ENCODE measurements at regions of chr15 and their contacts with region 1.

Region 1: DNA sequence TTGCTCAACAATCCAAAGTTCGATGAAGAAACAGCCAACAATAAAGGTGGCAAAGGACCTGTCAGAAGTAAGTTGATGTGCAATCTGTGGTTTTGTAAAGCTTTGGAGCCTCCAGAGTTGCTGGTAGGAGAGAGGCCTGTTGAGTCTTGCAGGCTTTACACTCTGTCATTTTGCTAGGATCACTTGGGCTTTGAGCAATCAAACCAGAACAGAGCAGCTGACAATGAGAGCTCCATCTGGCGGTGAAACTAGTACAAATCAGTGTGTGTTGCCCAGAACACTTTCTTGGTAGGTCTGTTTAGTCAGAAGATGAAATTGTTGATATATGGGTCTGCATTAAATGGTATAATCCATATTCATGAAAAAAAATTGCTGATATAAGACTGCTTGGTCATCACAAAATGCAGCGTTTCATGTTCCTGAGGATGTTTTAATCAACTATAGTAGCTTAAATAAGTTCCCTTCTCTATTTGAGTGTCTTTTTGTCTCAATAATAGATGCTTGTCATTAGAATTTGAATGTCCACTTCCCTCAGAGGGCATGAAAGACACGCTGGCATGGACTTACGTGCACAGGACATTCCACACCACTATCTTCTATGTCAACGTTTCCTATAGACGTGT is 25.7 kb downstream of the TMOD2 start:
- DNase-seq: peak; percentile 58
- H3K4me3 ChIP-seq: no peak overlapping the region
- H3K27ac ChIP-seq: no peak overlapping the region
- H3K27me3 ChIP-seq: no peaks in the 10 kb centered on the region
- CTCF ChIP-seq: peak; percentile 84

Region 2: DNA sequence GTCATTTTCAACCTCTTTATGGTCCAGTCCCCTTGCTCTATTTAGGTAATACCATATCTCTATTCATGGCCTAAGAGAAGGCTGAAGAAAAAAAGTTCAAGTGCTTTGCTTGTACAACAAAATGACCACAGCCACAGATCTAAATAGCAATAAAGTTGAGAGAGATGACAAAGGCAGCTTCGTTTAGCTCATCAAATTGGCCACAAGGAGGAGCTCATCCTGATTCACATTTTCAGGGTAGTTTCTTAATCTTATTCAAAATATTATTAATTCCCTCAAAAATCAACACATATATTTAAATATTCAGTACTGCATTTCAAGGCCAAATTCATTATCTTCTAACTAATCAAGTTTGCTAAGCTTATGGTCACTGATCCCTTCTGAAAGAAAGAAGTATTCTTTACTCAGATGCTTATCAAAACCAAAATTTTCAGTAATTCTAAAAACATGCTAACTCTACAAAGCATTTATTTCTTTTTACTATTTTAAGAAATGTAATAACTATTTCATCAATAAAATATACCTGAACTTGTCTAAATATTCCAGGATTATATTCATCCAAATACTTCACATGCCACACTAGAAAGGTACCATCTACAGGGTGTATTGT is 240.0 kb before region 1 on chr15:
- CTCF ChIA-PET with region 1: interaction called, 18 read pairs
- POLR2A ChIA-PET with region 1: no interaction called
- DNase-seq: no peak
- H3K4me3 ChIP-seq: no peak overlapping the region
- H3K27ac ChIP-seq: no peak overlapping the region
- H3K27me3 ChIP-seq: no peaks in the 10 kb centered on the region
- CTCF ChIP-seq: peak; percentile 77

Region 3: DNA sequence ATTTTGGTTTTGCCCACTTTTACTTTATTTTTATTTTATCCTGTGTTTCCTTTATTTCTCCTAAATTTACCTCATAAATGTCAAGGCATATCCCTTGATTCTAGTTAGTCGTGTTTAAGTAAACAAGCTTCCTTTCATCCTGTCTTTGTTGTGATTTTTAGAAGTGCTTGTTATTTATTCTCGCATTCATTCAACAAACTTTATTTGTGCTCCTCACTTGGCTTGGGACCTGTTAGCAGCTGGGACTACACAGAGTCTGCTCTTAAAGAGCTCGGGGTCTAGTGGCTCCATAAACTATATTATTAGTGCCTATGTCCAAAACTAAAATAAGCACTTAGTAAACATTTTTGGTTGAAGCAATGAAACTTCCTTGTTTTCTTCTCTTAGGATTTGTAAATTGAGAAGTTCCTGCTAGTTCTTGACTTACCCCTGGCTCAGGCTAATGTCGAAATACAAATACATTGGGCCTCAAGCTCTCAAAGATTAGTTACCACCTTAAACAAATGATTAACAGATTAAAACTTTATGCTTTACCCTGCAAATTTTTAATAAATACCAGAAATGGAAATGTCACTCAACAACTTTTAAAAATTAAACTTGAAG is 135.4 kb before region 1 on chr15:
- CTCF ChIA-PET with region 1: interaction called, 490 read pairs
- POLR2A ChIA-PET with region 1: no interaction called
- DNase-seq: no peak
- H3K4me3 ChIP-seq: no peak overlapping the region
- H3K27ac ChIP-seq: no peak overlapping the region
- H3K27me3 ChIP-seq: no peaks in the 10 kb centered on the region
- CTCF ChIP-seq: no peak

Region 4: DNA sequence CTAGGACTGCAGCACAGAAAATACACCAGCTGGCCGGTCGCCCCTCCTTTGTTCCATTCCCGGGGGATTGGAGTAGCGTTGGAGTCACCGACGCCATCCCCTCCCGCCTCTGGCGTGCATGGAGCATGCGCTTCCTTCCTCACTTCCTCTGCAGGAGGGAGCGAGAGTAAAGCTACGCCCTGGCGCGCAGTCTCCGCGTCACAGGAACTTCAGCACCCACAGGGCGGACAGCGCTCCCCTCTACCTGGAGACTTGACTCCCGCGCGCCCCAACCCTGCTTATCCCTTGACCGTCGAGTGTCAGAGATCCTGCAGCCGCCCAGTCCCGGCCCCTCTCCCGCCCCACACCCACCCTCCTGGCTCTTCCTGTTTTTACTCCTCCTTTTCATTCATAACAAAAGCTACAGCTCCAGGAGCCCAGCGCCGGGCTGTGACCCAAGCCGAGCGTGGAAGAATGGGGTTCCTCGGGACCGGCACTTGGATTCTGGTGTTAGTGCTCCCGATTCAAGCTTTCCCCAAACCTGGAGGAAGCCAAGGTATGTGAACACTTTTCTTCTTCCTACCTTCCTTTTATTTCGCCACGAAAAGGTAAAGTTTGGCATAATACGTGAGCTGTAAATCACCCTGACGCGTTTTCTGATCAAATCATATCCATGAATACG is 95.6 kb before region 1 on chr15 and contains the start of gene SCG3:
- CTCF ChIA-PET with region 1: interaction called, 14 read pairs
- POLR2A ChIA-PET with region 1: no interaction called
- DNase-seq: no peak
- H3K4me3 ChIP-seq: no peak within 1 kb of the TSS
- H3K27ac ChIP-seq: no peak within 1 kb of the TSS
- H3K27me3 ChIP-seq: peaks cover 3% of the 10 kb centered on the region
- CTCF ChIP-seq: no peak
- polyA plus RNA-seq, gene SCG3: not detected in 2 replicates

Region 5: DNA sequence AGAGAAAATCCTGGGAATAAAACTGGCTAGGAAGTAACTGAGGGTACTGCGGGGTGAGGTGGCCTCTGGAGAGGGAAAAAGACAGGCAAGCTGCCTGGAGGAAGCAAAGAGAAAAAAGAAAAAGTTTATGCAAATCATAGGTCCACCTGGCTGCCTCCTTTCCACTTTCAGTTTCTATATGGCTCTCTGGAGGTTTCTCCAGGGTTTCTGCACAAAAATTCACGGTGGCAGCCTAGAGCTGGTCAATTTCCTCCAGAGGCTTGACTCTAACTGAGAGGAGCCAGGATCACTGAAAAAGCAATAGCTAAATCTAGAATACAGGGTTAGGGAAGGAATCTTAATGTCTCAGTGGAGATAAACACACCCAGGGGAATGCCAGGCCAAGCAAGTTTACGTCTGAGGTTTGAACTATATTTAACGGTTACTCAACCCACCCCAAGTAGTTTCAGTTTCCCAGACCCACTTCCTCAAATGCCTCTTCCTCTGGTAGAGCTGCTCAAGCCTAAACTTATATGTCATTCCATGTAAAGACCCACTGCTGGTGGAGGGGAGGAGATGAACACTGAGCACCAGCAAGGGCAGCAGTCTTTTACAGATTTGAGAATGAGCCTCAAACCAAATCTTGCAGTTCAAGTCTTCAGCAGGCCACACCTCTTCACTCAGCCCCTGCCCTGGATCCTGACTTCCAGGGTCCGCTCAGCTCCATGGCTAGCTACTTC is 45.4 kb before region 1 on chr15:
- CTCF ChIA-PET with region 1: interaction called, 22 read pairs
- POLR2A ChIA-PET with region 1: no interaction called
- DNase-seq: peak; percentile 54
- H3K4me3 ChIP-seq: peak overlapping the region; percentile 39
- H3K27ac ChIP-seq: peak overlapping the region; percentile 73
- H3K27me3 ChIP-seq: no peaks in the 10 kb centered on the region
- CTCF ChIP-seq: no peak

Region 6: DNA sequence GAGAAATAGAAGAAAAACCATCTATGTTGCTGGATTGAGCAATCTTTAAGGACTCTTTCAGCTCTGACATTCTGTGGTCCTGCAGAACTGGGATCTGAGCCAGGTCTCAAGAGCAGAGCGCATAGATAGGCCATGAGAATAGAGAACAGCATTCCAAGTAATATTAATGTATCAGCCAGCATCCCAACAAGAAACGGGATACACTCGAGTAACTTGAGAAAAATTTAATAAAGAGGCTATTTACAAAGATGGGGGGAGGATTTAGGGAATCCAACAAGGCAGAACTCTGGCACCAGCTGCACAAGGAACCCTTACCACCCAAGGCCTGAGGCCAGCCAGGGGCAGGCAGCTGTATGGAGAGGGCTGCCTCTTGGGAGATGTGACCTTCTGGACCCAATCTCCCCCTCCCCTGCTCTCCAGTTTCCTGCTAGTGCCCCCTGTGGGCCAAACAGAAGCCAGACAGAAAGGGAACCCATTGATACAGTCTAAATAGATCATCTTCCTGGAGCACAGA is 17.4 kb before region 1 on chr15:
- CTCF ChIA-PET with region 1: interaction called, 41 read pairs
- POLR2A ChIA-PET with region 1: no interaction called
- DNase-seq: peak; percentile 81
- H3K4me3 ChIP-seq: no peak overlapping the region
- H3K27ac ChIP-seq: peak overlapping the region; percentile 34
- H3K27me3 ChIP-seq: peaks cover 4% of the 10 kb centered on the region
- CTCF ChIP-seq: peak; percentile 40

Region 7: GRCh38 chr15:51971375-51972133 is 194.5 kb after region 1 on chr15 and contains the start of gene LEO1:
- CTCF ChIA-PET with region 1: no interaction called
- POLR2A ChIA-PET with region 1: no interaction called
- DNase-seq: peak; percentile 97
- H3K4me3 ChIP-seq: peak within 1 kb of the TSS; percentile 96
- H3K27ac ChIP-seq: peak within 1 kb of the TSS; percentile 87
- H3K27me3 ChIP-seq: no peaks in the 10 kb centered on the region
- CTCF ChIP-seq: peak; percentile 51
- polyA plus RNA-seq, gene LEO1: 6.8 and 8.0 TPM in 2 replicates

Region 8: DNA sequence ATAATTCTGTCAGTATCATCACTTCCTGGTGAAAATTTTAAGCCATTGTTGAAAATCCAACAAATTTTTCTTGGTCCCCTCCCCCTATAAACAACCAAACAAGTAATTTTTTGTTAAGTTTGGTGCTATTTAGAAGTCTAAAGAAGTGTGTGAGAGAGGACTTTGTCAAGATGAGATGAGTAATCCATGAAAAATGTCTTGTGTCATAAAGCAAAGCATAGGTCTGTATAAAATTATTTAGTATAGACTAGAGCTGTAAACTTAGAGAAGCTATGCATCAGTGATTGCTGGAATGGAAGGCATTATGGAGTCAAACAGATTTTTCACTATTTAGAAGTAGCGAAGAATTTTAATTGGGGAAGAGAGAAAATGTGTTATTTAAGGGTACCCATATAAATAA is 273.4 kb after region 1 on chr15:
- CTCF ChIA-PET with region 1: no interaction called
- POLR2A ChIA-PET with region 1: no interaction called
- DNase-seq: peak; percentile 15
- H3K4me3 ChIP-seq: no peak overlapping the region
- H3K27ac ChIP-seq: no peak overlapping the region
- H3K27me3 ChIP-seq: no peaks in the 10 kb centered on the region
- CTCF ChIP-seq: no peak

Measured in AG04450 (cell line).